ENCODE measurements at regions of chr2 and their contacts with region 1.

Region 1: DNA sequence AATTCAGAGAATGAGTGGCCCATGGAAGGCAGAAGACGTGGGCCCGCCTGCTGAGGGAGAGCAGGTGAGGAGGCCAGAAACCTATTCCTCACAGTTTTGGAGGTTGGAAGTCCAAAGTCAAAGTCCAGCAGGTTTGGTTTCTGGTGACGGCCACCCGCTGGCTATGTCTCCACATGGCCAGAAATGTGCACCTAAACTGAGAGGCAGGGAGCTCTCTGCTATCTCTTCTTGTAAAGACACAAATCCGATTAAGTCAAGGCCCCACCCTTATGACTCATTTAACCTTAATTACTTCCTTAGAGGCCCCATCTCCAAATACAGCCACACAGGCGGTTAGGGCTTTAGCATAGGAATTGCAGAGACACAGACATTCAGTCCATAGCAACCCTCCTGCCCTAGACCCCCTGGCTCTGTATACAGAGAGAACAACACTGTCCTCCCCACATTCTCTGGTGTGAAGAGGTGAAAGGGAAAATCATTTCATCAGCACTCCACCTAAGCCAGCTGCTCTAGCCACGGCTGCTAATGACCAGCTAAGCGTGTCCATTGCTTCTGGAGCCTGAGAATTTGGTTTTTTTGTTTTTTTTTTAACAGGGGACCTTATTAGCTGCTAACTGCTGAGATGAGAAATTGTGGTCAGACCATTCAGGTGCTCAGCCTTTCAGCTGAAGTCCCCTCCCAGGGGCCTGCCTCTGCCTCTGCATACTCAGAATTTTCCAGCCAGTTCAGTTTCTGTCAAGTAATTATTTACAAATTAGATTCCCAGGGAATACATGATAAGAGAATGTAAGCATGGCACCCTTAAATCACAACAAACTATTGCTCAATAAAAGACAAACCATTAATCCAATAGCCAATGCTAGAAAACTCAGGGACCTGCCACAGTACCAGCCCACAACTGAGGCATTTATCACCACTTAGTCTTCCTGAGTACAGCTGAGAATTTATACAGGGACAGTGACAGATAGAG is 368.7 kb upstream of the ID2 start:
- DNase-seq: no peak
- H3K4me3 Mint-ChIP-seq: no peak overlapping the region
- H3K27ac Mint-ChIP-seq: no peak overlapping the region
- H3K4me1 Mint-ChIP-seq: peaks cover 60% of the 10 kb centered on the region
- H3K27me3 Mint-ChIP-seq: peaks cover 22% of the 10 kb centered on the region

Region 2: DNA sequence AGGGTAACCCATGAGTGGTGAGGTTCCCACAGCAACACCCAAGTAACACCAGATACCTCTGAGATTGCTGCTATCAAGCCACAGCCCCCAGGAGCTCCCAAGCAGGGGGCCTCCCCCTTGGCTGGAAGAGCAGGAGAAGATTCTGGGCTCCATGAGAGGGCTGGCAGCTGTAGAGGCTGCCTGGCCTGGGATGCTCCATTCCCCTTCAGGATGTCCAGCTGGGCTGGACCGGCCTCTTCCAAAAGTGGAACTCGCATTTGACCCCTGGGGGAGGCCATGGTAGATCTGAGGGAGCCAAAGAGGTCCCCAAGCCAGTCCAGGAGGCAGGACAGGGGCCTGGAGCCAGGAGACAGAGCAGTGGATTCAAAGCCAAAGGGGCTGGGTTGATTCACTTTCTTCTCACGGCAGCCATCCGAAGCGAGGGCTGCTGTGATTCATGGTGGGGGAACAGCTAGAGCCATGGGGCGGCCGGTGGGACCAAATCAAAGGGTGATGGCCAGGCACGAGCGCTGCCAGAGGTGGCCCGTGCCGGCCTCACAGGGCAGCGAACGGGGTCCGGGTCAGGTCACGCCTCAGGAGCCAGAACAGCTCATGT is 273.4 kb after region 1 on chr2:
- intact Hi-C with region 1: loop called (anchors 5 kb)
- DNase-seq: no peak
- H3K4me3 Mint-ChIP-seq: peak overlapping the region; percentile 26
- H3K27ac Mint-ChIP-seq: peak overlapping the region; percentile 57
- H3K4me1 Mint-ChIP-seq: peaks cover 52% of the 10 kb centered on the region
- H3K27me3 Mint-ChIP-seq: peaks cover 16% of the 10 kb centered on the region